ENCODE measurements at regions of chrX and their contacts with region 1.

Region 1: GRCh38 chrX:57595381-57595811 is 3.6 kb downstream of the ZXDB start:
- DNase-seq: no peak

Region 2: DNA sequence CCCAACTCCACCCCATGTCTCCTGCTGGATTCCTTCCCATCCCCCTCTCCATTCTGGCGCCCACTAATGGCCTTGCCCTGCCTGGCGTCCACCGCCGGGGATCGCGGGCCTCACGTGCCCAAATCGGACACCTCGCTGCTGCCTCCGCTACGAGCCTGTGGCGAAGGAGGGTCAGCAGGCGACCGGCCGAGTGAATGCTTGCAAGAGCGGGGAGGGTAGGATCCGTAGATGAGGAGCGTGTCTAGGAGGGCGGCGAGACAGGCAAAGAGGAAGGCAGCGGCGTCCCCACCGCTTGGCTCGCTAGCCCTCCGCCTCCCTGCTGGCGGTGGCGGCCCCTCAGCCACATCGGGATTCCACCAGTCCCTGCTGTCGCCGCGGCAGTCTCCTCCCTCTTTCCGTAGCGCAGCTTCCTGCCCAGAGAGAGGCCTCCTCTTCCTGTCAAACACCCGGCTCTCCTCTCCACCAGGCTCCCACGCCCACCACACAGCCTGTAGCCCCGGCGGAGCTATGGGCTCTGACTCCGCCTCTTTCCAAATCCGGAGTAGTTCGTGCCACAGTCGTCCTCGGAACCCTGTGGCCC is 474.1 kb before region 1 on chrX and contains the start of gene SPIN2B:
- in situ Hi-C with region 1: loop called (anchors 25 kb)
- DNase-seq: peak; percentile 98

Region 3: GRCh38 chrX:57918750-57919436 is 323.5 kb after region 1 on chrX:
- in situ Hi-C with region 1: loop called (anchors 25 kb)
- DNase-seq: peak; percentile 74

Measured in KBM-7 (cell line).